Tibial artery (tissue), 4 donors: ENCODE measurements at regions of chr18 and their contacts with region 1.

Region 1: DNA sequence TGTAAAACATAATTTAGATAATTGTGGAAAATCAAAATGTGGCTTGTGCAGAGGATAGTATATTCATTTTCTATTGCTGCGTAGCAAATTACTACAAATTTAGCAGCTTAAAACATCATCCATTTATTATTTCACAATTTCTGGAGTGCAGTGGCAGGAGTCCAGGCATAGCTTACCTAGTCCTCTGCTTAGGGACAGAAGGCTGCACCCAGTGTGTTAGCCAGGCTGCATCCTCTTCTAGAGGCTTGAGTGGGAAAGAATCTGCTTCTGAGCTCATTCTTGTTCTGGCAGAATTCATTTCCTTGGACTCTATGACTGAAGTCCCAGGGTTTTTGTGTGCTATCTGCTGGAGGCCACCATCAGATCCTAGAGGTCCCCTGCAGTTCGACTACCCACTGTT is 39.7 kb downstream of the MRO start:
- DNase-seq: no peak
- H3K4me3 ChIP-seq: no peak overlapping the region
- H3K27ac ChIP-seq: no peak overlapping the region
- H3K4me1 ChIP-seq: no peaks in the 10 kb centered on the region
- H3K27me3 ChIP-seq: no peaks in the 10 kb centered on the region
- CTCF ChIP-seq: no peak

Region 2: GRCh38 chr18:50507120-50507590 is 273.0 kb before region 1 on chr18:
- intact Hi-C with region 1: loop called (anchors 2 kb)
- DNase-seq: peak in 1 of 2 donors; percentile 25
- H3K4me3 ChIP-seq: no peak overlapping the region
- H3K27ac ChIP-seq: no peak overlapping the region
- H3K4me1 ChIP-seq: no peaks in the 10 kb centered on the region
- H3K27me3 ChIP-seq: no peaks in the 10 kb centered on the region
- CTCF ChIP-seq: peak; percentile 67 to 75